ENCODE measurements at regions of chr1 and their contacts with region 1.

Region 1: GRCh38 chr1:244272471-244273261 is 179.0 kb downstream of the ADSS2 start:
- DNase-seq: peak; percentile 67
- H3K4me3 ChIP-seq: no peak overlapping the region
- CTCF ChIP-seq: peak; percentile 92

Region 2: DNA sequence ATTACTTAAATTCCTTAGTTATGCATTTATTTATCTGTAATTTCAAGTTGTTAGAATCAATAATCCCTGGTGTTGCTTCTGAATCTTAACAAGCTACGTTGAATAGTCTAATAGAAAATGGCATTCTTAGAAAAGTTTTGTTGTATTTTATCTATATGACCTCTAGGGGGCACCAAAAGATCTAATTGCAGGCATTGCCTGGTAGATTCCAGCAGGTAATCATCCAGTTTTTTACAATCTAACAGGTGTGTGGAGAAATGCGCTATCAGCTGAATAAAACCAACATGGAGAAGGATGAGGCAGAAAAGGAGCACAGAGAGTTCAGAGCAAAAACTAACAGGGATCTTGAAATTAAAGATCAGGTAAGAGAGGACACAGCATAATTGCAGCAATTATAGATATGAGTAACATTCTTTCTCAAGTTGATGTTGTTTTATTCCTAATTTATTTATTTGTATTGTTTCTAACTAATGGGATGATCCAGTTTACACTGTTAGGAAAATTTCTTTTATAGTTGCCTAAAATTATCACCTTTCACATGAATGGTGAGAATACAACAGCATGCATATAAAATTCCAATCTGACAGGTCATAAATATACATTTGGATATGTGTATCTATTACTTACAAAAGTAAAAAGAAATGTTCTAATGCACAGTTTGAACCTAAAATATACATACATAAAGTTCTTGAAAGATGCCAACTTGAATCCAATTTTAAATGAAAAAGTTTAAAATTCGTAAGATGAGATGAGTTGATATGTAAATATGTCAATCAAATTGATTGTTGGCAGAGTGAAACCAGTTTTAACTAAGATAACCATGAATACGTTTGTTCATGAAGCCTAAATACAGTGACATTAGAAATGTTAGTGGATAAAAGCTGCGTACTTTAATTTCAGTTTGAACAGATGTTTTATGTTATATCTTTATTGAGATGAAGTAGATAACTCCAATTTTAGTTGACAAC is 928.4 kb before region 1 on chr1:
- CTCF ChIA-PET with region 1: interaction called, 44 read pairs
- POLR2A ChIA-PET with region 1: no interaction called
- DNase-seq: no peak
- H3K4me3 ChIP-seq: no peak overlapping the region
- CTCF ChIP-seq: peak; percentile 30

Region 3: GRCh38 chr1:244256086-244256676 is 16.5 kb before region 1 on chr1:
- CTCF ChIA-PET with region 1: interaction called, 24 read pairs
- POLR2A ChIA-PET with region 1: no interaction called
- DNase-seq: no peak
- H3K4me3 ChIP-seq: no peak overlapping the region
- CTCF ChIP-seq: no peak

Region 4: GRCh38 chr1:244289976-244290375 is 17.3 kb after region 1 on chr1:
- CTCF ChIA-PET with region 1: interaction called, 12 read pairs
- POLR2A ChIA-PET with region 1: no interaction called
- DNase-seq: no peak
- H3K4me3 ChIP-seq: no peak overlapping the region
- CTCF ChIP-seq: no peak

Measured in AG04449 (cell line).